B cell (primary cell): ENCODE measurements at regions of chr3 and their contacts with region 1.

Region 1: GRCh38 chr3:10344147-10344943 is 23.4 kb upstream of the SEC13 start:
- DNase-seq: peak; percentile 79
- ATAC-seq: peak; percentile 65
- H3K4me3 ChIP-seq: no peak overlapping the region
- H3K4me3 Mint-ChIP-seq: no peak overlapping the region
- H3K27ac ChIP-seq: no peak overlapping the region
- H3K27ac Mint-ChIP-seq: no peak overlapping the region
- H3K4me1 ChIP-seq: peaks cover 3 to 5% of the 10 kb centered on the region in 2 donors
- H3K4me1 Mint-ChIP-seq: peaks cover 2% of the 10 kb centered on the region
- H3K27me3 ChIP-seq: no peaks in the 10 kb centered on the region
- H3K27me3 Mint-ChIP-seq: peaks cover 4% of the 10 kb centered on the region
- CTCF ChIP-seq: peak; percentile 86

Region 2: GRCh38 chr3:10435850-10436249 is 91.5 kb after region 1 on chr3:
- CTCF ChIA-PET with region 1: interaction called, 3 read pairs
- POLR2A ChIA-PET with region 1: no interaction called
- intact Hi-C with region 1: loop called (anchors 1 kb)
- DNase-seq: no peak
- ATAC-seq: no peak
- H3K4me3 ChIP-seq: no peak overlapping the region
- H3K4me3 Mint-ChIP-seq: no peak overlapping the region
- H3K27ac ChIP-seq: no peak overlapping the region
- H3K27ac Mint-ChIP-seq: no peak overlapping the region
- H3K4me1 ChIP-seq: peaks cover 30 to 53% of the 10 kb centered on the region in 2 donors
- H3K4me1 Mint-ChIP-seq: peaks cover 39% of the 10 kb centered on the region
- H3K27me3 ChIP-seq: no peaks in the 10 kb centered on the region
- H3K27me3 Mint-ChIP-seq: no peaks in the 10 kb centered on the region
- CTCF ChIP-seq: no peak

Region 3: DNA sequence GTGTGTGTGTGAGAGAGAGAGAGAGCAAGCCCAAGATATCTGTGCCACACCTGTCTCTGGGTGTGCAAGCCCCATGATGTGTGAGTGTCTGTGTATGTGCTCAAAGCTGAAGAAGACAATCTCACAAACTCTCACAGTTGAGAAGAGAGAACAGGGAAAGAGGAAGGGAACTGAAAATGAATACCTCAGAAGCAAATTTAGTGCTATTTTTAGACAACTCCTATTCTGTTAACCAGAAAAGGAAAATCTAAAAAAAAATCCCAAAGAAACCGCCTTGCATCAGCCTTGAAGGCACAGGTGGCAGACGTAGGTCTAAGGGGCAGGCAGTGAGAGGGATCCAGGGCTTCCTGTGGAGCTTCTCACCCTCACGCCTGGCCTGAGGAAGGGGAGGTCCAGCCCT is 113.2 kb after region 1 on chr3:
- CTCF ChIA-PET with region 1: interaction called, 5 read pairs
- POLR2A ChIA-PET with region 1: no interaction called
- intact Hi-C with region 1: loop called (anchors 2 kb)
- DNase-seq: no peak
- ATAC-seq: no peak
- H3K4me3 ChIP-seq: no peak overlapping the region
- H3K4me3 Mint-ChIP-seq: peak overlapping the region; percentile 14
- H3K27ac ChIP-seq: no peak overlapping the region
- H3K27ac Mint-ChIP-seq: no peak overlapping the region
- H3K4me1 ChIP-seq: peaks cover 17 to 20% of the 10 kb centered on the region in 2 donors
- H3K4me1 Mint-ChIP-seq: peaks cover 23% of the 10 kb centered on the region
- H3K27me3 ChIP-seq: no peaks in the 10 kb centered on the region
- H3K27me3 Mint-ChIP-seq: peaks cover under 1% of the 10 kb centered on the region
- CTCF ChIP-seq: no peak

Region 4: GRCh38 chr3:10522646-10523303 is 178.4 kb after region 1 on chr3:
- CTCF ChIA-PET with region 1: interaction called, 17 read pairs
- POLR2A ChIA-PET with region 1: no interaction called
- intact Hi-C with region 1: no loop called
- DNase-seq: peak; percentile 42
- ATAC-seq: no peak
- H3K4me3 ChIP-seq: no peak overlapping the region
- H3K4me3 Mint-ChIP-seq: no peak overlapping the region
- H3K27ac ChIP-seq: no peak overlapping the region
- H3K27ac Mint-ChIP-seq: no peak overlapping the region
- H3K4me1 ChIP-seq: peaks cover 0 to 8% of the 10 kb centered on the region in 2 donors
- H3K4me1 Mint-ChIP-seq: peaks cover 10% of the 10 kb centered on the region
- H3K27me3 ChIP-seq: peaks cover 0 to 30% (median 6%) of the 10 kb centered on the region in 4 experiments
- H3K27me3 Mint-ChIP-seq: peaks cover 62% of the 10 kb centered on the region
- CTCF ChIP-seq: no peak

Region 5: DNA sequence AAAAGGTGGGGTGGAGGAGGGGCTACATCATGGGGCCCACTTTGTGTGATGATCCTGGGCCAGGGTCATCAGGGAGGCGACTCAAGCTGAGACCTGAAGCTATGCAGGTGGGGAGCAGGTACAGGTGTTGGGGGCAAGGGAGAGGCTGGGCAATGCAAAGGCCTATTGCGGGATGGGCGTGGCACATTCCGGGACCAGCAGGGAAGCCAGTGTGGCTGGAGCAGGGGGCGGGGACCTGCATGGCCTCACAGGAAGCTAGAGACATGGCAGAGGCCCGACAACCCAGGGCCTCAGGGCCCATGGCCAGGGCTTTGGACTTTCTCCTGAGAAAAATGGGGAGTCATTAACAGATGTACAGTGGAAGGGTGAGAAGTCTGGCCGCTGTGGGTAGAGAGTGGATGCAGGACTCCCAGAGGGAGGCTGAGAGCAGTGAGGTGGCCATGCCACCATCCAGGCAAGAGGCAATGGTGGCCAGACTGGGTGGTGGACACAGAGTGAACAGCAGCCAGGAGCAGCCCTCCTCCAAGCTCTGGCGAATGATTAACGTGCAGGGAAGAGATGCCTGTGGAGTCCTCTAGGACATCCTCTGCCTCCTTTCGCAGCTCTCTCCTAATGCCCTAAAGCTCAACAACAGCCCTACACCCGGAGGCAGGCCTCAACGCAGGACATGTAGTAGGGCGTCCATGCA is 283.7 kb after region 1 on chr3:
- CTCF ChIA-PET with region 1: no interaction called
- POLR2A ChIA-PET with region 1: no interaction called
- intact Hi-C with region 1: no loop called
- DNase-seq: no peak
- ATAC-seq: no peak
- H3K4me3 ChIP-seq: no peak overlapping the region
- H3K4me3 Mint-ChIP-seq: no peak overlapping the region
- H3K27ac ChIP-seq: no peak overlapping the region
- H3K27ac Mint-ChIP-seq: no peak overlapping the region
- H3K4me1 ChIP-seq: no peaks in the 10 kb centered on the region
- H3K4me1 Mint-ChIP-seq: no peaks in the 10 kb centered on the region
- H3K27me3 ChIP-seq: peaks cover 0 to 3% (median 0%) of the 10 kb centered on the region in 4 experiments
- H3K27me3 Mint-ChIP-seq: peaks cover 16% of the 10 kb centered on the region
- CTCF ChIP-seq: no peak